Naive thymus-derived CD4-positive, alpha-beta T cell (primary cell): ENCODE measurements at regions of chr3 and their contacts with region 1.

Region 1: DNA sequence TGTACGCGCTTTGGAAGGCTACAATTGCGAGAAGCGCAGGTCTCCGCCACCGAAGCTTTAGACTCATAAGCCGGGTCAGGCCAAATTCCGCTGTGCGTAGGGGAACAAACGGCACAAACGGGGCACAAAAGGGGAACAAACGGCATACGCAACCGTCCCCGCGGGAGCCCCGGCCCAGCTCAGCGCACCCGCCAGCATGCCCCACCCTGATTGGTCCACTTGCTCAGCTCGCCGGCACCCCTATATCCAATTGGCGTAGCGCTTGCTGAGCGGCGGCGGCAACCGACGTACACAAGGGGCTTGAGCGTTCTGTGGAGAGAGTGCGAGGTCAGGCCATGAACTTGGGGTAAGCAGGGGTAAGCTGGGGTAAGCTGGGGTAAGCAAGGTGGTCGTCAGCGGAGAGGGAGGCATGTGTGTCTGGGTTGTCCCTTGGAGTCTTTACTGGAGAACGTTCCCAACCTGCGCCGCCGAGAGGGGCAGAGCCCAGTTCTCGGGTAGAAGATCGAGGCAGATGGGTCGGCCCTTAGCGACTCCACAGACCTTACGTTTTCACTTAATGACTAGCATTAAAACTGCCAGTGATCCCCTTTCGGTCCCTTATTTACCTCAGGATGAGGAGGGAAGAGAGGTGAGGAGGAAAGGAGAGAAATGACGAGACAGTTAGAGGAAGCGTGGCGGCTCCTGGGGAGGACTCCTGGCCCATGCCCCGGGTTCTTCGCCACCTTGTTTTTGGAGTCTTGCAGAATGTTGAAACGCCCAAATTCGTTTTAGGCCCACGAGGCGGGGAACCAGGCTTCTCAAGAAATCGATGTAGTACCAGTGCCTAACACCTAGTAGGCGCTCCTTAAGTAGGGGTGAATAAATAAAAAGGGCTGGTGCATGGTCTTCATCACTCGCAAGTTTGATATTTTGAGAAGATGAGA is at the start of gene CCDC66:
- DNase-seq: peak; percentile 85 to 95 (median 93)
- ATAC-seq: peak; percentile 96
- H3K4me3 ChIP-seq: peak within 1 kb of the TSS; percentile 96
- H3K4me3 Mint-ChIP-seq: peak within 1 kb of the TSS; percentile 91 to 100 (median 98)
- H3K27ac ChIP-seq: peak within 1 kb of the TSS; percentile 99
- H3K27ac Mint-ChIP-seq: peak within 1 kb of the TSS; percentile 93 to 100 (median 98)
- H3K4me1 ChIP-seq: peaks cover 9 to 17% of the 10 kb centered on the region in 2 donors
- H3K4me1 Mint-ChIP-seq: peaks cover 12 to 51% (median 38%) of the 10 kb centered on the region in 7 donors
- H3K27me3 ChIP-seq: no peaks in the 10 kb centered on the region
- H3K27me3 Mint-ChIP-seq: peaks cover 0 to 25% (median 0%) of the 10 kb centered on the region in 5 donors
- total RNA-seq, gene CCDC66: 38.6 to 115 (median 77.3) TPM

Region 2: DNA sequence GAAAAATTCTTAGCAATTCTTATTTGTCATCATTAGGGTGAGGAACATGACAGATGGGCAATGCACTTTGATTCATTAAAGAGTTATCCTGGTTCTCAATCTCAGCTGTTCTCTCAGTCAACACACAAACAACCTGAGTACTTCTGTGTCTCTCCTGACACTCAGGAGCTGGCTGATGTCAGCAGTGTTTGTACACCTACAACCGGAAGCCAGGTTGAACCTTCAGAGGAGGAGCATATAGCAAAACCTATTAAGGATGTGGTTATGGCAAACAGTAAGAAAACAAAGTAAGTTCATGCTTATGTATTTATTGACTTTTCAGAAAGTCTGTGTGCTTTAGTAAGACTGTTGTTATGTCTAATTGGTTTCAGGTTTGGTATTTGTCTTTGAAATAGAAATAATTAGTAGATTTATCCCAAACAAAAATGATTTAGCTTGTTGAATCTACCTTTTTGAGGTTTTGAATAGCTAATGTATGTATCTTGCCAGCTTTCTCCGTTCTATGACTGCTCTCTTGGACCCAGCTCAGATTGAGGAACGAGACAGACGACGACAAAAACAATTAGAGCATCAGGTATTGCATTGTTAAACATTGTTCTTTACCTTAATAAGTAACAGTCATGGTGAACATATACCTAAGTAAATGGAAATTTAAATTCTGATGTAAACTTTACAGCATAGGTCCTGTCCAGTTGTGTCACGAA is 36.4 kb after region 1 on chr3:
- CTCF ChIA-PET with region 1: interaction called, 4 read pairs
- POLR2A ChIA-PET with region 1: interaction called, 63 read pairs
- intact Hi-C with region 1: loop called (anchors 1 to 2 kb)
- DNase-seq: peak in 7 of 9 donors; percentile 67 to 86 (median 79)
- ATAC-seq: peak; percentile 99
- H3K4me3 ChIP-seq: peak overlapping the region; percentile 17
- H3K4me3 Mint-ChIP-seq: peak overlapping the region; percentile 45 to 85 (median 76)
- H3K27ac ChIP-seq: peak overlapping the region; percentile 63
- H3K27ac Mint-ChIP-seq: peak overlapping the region; percentile 87 to 98 (median 95)
- H3K4me1 ChIP-seq: peaks cover 23 to 56% of the 10 kb centered on the region in 2 donors
- H3K4me1 Mint-ChIP-seq: peaks cover 26 to 87% (median 75%) of the 10 kb centered on the region in 7 donors
- H3K27me3 ChIP-seq: no peaks in the 10 kb centered on the region
- H3K27me3 Mint-ChIP-seq: no peaks in the 10 kb centered on the region

Region 3: DNA sequence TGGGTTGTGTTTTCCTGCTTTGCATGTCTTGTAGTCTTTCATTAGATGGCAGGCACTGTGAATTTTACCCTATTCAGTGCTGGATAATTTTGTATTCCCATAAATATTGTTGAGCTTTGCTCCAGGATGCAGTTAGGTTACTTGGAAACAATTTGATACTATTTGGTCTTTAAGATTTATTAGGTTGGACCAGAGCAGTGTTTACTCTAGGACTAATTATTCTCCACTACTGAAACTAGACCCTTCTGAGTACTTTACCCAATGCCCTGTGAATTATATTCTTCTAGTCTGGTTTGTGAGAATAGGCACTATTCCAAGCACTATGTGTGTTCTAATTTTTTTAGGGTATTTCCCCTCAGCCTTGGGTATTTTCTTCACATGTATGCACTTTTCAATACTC is 163.7 kb after region 1 on chr3:
- CTCF ChIA-PET with region 1: no interaction called
- POLR2A ChIA-PET with region 1: no interaction called
- intact Hi-C with region 1: no loop called
- DNase-seq: no peak
- ATAC-seq: no peak
- H3K4me3 ChIP-seq: no peak overlapping the region
- H3K4me3 Mint-ChIP-seq: peak overlapping the region in 2 of 10 donors; percentile 17 to 39
- H3K27ac ChIP-seq: no peak overlapping the region
- H3K27ac Mint-ChIP-seq: peak overlapping the region in 6 of 9 donors; percentile 39 to 89 (median 64)
- H3K4me1 ChIP-seq: peaks cover 7 to 20% of the 10 kb centered on the region in 2 donors
- H3K4me1 Mint-ChIP-seq: peaks cover 22 to 62% (median 50%) of the 10 kb centered on the region in 7 donors
- H3K27me3 ChIP-seq: no peaks in the 10 kb centered on the region
- H3K27me3 Mint-ChIP-seq: no peaks in the 10 kb centered on the region

Region 4: GRCh38 chr3:56988458-56989168 is 431.4 kb after region 1 on chr3:
- CTCF ChIA-PET with region 1: no interaction called
- POLR2A ChIA-PET with region 1: interaction called, 3 read pairs
- intact Hi-C with region 1: loop called (anchors 2 kb)
- DNase-seq: peak; percentile 45 to 76 (median 63)
- ATAC-seq: peak; percentile 85
- H3K4me3 ChIP-seq: no peak overlapping the region
- H3K4me3 Mint-ChIP-seq: peak overlapping the region in 5 of 10 donors; percentile 29 to 46 (median 42)
- H3K27ac ChIP-seq: no peak overlapping the region
- H3K27ac Mint-ChIP-seq: peak overlapping the region in 3 of 9 donors; percentile 28 to 81 (median 62)
- H3K4me1 ChIP-seq: peaks cover 3 to 9% of the 10 kb centered on the region in 2 donors
- H3K4me1 Mint-ChIP-seq: peaks cover 5 to 34% (median 18%) of the 10 kb centered on the region in 7 donors
- H3K27me3 ChIP-seq: no peaks in the 10 kb centered on the region
- H3K27me3 Mint-ChIP-seq: peaks cover 0 to 26% (median 5%) of the 10 kb centered on the region in 5 donors

Region 5: DNA sequence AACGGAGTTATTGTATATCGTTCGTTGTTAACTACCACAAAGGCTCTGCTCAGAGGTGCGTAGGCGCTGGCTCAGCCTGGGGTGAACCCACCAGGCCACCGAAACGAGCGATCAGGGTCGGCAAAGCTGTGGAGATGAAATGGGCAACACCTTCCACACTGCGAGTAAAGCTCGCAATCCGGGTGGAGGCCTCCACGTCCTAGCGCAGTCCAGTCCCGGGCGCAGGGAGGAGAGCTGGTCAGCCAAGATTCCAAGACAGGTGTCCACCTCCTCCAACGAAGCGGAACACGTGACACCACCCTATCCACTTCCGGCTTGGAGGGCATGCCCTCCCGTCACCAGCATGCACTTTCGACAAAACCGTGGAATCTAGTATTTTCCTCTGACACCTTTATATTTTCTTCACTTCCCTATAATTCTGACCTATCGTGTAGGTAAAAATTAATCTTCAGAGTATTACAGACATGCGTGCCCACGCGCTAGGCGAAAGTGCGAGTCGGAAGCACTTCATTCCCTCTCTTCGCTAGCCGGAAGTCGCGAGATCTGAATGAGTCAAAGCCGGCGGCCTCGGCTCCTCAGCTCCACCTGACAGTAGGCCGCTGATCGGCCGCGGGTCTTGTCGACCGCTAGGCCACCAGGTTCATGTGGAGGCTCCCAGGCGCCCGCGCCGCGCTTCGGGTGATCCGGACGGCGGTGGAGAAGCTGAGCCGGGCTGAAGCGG is 998.7 kb after region 1 on chr3 and contains the start of gene PDE12:
- CTCF ChIA-PET with region 1: no interaction called
- POLR2A ChIA-PET with region 1: no interaction called
- intact Hi-C with region 1: loop called (anchors 2 to 5 kb)
- DNase-seq: peak; percentile 68 to 87 (median 81)
- ATAC-seq: peak; percentile 86
- H3K4me3 ChIP-seq: peak within 1 kb of the TSS; percentile 74
- H3K4me3 Mint-ChIP-seq: peak within 1 kb of the TSS; percentile 85 to 99 (median 92)
- H3K27ac ChIP-seq: peak within 1 kb of the TSS; percentile 96
- H3K27ac Mint-ChIP-seq: peak within 1 kb of the TSS; percentile 94 to 99 (median 98)
- H3K4me1 ChIP-seq: peaks cover 22 to 26% of the 10 kb centered on the region in 2 donors
- H3K4me1 Mint-ChIP-seq: peaks cover 13 to 50% (median 39%) of the 10 kb centered on the region in 7 donors
- H3K27me3 ChIP-seq: no peaks in the 10 kb centered on the region
- H3K27me3 Mint-ChIP-seq: no peaks in the 10 kb centered on the region
- total RNA-seq, gene PDE12: 24.0 to 35.5 (median 27.8) TPM